HCT116 (cell line): ENCODE measurements at regions of chrX and their contacts with region 1.

Region 1: GRCh38 chrX:80876877-80877276 is 67.2 kb upstream of the BRWD3 start:
- DNase-seq: peak; percentile 13
- ATAC-seq: no peak
- H3K4me3 ChIP-seq: no peak overlapping the region
- H3K27ac ChIP-seq: no peak overlapping the region
- H3K4me1 ChIP-seq: no peaks in the 10 kb centered on the region
- H3K27me3 ChIP-seq: no peaks in the 10 kb centered on the region
- CTCF ChIP-seq: peak; percentile 17 to 40 (median 25); a peak in 3 of 6 replicates
- POLR2A ChIP-seq: no peak
- RAD21 ChIP-seq: peak; percentile 47

Region 2: GRCh38 chrX:81121513-81122382 is 244.9 kb after region 1 on chrX:
- CTCF ChIA-PET with region 1: interaction called, 3 read pairs
- POLR2A ChIA-PET with region 1: no interaction called
- RAD21 ChIA-PET with region 1: interaction called in 1 of 2 experiments, 4 read pairs
- intact Hi-C with region 1: loop called (anchors 10 kb)
- DNase-seq: peak; percentile 86
- ATAC-seq: peak; percentile 95
- H3K4me3 ChIP-seq: peak overlapping the region; percentile 42 to 58
- H3K27ac ChIP-seq: no peak overlapping the region; the same call in 1 of the 2 replicates
- H3K4me1 ChIP-seq: peaks cover 0 to 4% of the 10 kb centered on the region in 2 experiments; a peak in 2 of 4 replicates
- H3K27me3 ChIP-seq: no peaks in the 10 kb centered on the region
- CTCF ChIP-seq: no peak
- POLR2A ChIP-seq: peak; percentile 61
- RAD21 ChIP-seq: no peak

Region 3: DNA sequence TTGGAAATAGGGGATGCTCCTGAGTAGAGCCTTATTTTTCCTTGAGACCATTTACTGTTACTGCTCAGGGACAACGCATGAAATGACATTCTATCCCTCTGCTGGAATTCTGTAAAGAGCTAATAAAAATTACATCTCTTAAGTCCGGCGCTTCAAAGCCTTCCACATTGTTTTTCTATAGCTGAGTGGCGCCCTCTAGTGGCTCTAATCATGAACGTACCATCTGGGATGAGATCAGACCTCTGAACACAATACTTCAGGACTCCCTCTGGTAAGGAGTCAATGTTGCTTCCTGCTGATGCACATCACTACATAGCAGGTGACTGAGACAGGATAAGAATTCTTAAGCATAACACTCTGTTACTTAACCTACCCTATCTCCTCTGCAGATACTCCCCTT is 318.8 kb after region 1 on chrX:
- CTCF ChIA-PET with region 1: interaction called, 12 read pairs
- POLR2A ChIA-PET with region 1: no interaction called
- RAD21 ChIA-PET with region 1: no interaction called
- intact Hi-C with region 1: loop called (anchors 5 kb)
- DNase-seq: peak; percentile 33
- ATAC-seq: peak; percentile 75
- H3K4me3 ChIP-seq: no peak overlapping the region
- H3K27ac ChIP-seq: no peak overlapping the region
- H3K4me1 ChIP-seq: no peaks in the 10 kb centered on the region
- H3K27me3 ChIP-seq: no peaks in the 10 kb centered on the region
- CTCF ChIP-seq: peak in 2 of 3 experiments; percentile 52 to 65; a peak in 4 of 6 replicates
- POLR2A ChIP-seq: no peak
- RAD21 ChIP-seq: peak; percentile 34; the same call in 1 of the 2 replicates

Region 4: GRCh38 chrX:81377329-81377728 is 500.5 kb after region 1 on chrX:
- CTCF ChIA-PET with region 1: interaction called, 5 read pairs
- POLR2A ChIA-PET with region 1: no interaction called
- RAD21 ChIA-PET with region 1: no interaction called
- intact Hi-C with region 1: loop called (anchors 5 kb)
- DNase-seq: no peak
- ATAC-seq: no peak
- H3K4me3 ChIP-seq: no peak overlapping the region
- H3K27ac ChIP-seq: no peak overlapping the region
- H3K4me1 ChIP-seq: no peaks in the 10 kb centered on the region
- H3K27me3 ChIP-seq: no peaks in the 10 kb centered on the region
- CTCF ChIP-seq: peak; percentile 9 to 49 (median 33); a peak in 5 of 6 replicates
- POLR2A ChIP-seq: no peak
- RAD21 ChIP-seq: peak; percentile 39